ENCODE measurements at regions of chr16 and their contacts with region 1.

Region 1: DNA sequence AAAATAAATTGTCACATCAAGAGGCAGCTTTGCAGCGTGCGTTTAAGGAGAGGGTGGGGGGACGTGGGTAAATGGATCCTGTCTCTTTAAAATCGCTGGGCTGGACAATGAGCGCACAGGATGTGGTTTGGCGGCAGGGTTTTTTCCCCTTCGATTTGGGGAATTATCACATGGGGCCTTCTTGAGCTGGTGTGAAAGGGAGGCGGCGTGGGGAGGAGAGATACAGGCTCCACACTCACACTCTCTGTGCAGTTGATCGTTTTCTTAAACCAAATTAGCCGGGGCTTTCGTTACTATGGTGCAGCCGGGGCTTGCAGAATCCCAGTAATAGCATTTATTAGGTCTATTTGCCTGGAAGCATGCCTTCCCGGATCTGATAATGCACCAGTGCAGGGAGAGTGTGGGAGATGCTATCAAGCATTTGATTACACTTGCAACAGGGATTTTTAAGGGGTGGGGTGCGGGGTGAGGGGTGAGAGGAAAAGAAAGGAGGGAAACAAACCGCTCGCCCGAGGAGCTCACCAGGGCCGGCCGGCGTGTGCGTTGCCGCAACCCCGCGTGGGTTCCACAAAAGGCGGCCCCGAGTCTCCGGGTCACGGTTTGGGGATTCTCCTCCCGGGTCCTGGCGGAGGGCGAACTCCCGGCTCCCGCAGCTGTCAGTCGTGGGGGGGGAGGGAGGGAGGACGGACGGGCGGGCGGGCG is 58.9 kb upstream of the GSE1 start:
- DNase-seq: peak in 9 of 10 donors; percentile 33 to 83 (median 63)
- ATAC-seq: peak; percentile 39 to 58
- H3K4me3 Mint-ChIP-seq: peak overlapping the region; percentile 90 to 98 (median 96)
- H3K27ac Mint-ChIP-seq: peak overlapping the region; percentile 63 to 97 (median 94)
- H3K4me1 Mint-ChIP-seq: peaks cover 22 to 43% (median 41%) of the 10 kb centered on the region in 4 donors
- H3K27me3 Mint-ChIP-seq: no peaks in the 10 kb centered on the region

Region 2: GRCh38 chr16:85448557-85449197 is 105.6 kb before region 1 on chr16:
- POLR2A ChIA-PET with region 1: interaction called, 57 read pairs
- DNase-seq: peak; percentile 48 to 88 (median 73)
- ATAC-seq: peak; percentile 84 to 85
- H3K4me3 Mint-ChIP-seq: peak overlapping the region; percentile 73 to 86 (median 80)
- H3K27ac Mint-ChIP-seq: peak overlapping the region; percentile 86 to 98 (median 96)
- H3K4me1 Mint-ChIP-seq: peaks cover 28 to 77% (median 66%) of the 10 kb centered on the region in 4 donors
- H3K27me3 Mint-ChIP-seq: no peaks in the 10 kb centered on the region

Region 3: DNA sequence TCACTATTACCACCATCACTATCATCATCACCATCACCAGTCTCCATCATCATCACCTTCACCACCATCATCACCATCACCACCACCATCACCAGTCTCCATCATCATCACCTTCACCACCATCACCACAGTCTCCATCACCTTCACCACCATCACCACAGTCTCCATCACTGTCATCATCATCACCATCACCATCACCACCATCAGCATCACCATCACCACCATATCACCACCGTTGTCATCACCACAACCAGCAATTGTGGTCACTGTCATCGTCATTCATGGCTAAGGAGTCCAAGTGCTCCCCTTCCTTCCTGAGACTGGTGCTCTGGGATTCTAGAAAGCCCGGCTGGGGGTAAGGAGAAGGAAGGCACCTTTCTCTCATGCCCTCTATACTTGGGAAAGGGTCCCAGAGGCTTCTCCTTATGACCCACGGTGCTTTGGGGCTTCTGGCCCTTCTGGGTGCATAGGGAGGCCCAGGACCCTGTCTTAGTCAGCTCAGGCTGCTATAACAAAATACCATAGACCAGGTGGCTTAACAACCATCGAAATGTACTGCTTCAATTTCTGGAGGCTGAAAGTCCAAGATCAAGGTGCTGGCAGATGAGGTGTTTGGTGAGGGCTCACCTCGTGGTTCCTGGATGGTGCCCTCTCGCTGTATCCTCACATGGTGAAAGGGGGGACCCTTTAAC is 34.6 kb before region 1 on chr16:
- POLR2A ChIA-PET with region 1: no interaction called
- DNase-seq: peak in 1 of 10 donors; percentile 35
- ATAC-seq: no peak
- H3K4me3 Mint-ChIP-seq: peak overlapping the region in 2 of 10 donors; percentile 8 to 68
- H3K27ac Mint-ChIP-seq: peak overlapping the region in 5 of 10 donors; percentile 1 to 94 (median 57)
- H3K4me1 Mint-ChIP-seq: peaks cover 3 to 14% (median 8%) of the 10 kb centered on the region in 4 donors
- H3K27me3 Mint-ChIP-seq: peaks cover 0 to 4% (median 0%) of the 10 kb centered on the region in 5 donors

Region 4: GRCh38 chr16:85564277-85565051 is 10.2 kb after region 1 on chr16:
- POLR2A ChIA-PET with region 1: interaction called, 39 read pairs
- DNase-seq: peak in 2 of 10 donors; percentile 13 to 25
- ATAC-seq: no peak
- H3K4me3 Mint-ChIP-seq: peak overlapping the region in 2 of 10 donors; percentile 31 to 41
- H3K27ac Mint-ChIP-seq: peak overlapping the region; percentile 70 to 92 (median 84)
- H3K4me1 Mint-ChIP-seq: peaks cover 31 to 85% (median 82%) of the 10 kb centered on the region in 4 donors
- H3K27me3 Mint-ChIP-seq: no peaks in the 10 kb centered on the region

Region 5: GRCh38 chr16:85569615-85570212 is 15.5 kb after region 1 on chr16:
- POLR2A ChIA-PET with region 1: interaction called, 39 read pairs
- DNase-seq: peak in 8 of 10 donors; percentile 28 to 71 (median 40)
- ATAC-seq: peak; percentile 58 to 69
- H3K4me3 Mint-ChIP-seq: peak overlapping the region; percentile 61 to 88 (median 81)
- H3K27ac Mint-ChIP-seq: peak overlapping the region; percentile 87 to 95 (median 91)
- H3K4me1 Mint-ChIP-seq: peaks cover 44 to 81% (median 78%) of the 10 kb centered on the region in 4 donors
- H3K27me3 Mint-ChIP-seq: no peaks in the 10 kb centered on the region

Region 6: GRCh38 chr16:85583491-85584181 is 29.4 kb after region 1 on chr16:
- POLR2A ChIA-PET with region 1: interaction called, 12 read pairs
- DNase-seq: no peak
- ATAC-seq: peak; percentile 73 to 87
- H3K4me3 Mint-ChIP-seq: peak overlapping the region in 4 of 10 donors; percentile 27 to 47 (median 32)
- H3K27ac Mint-ChIP-seq: peak overlapping the region; percentile 9 to 91 (median 70)
- H3K4me1 Mint-ChIP-seq: peaks cover 26 to 59% (median 52%) of the 10 kb centered on the region in 4 donors
- H3K27me3 Mint-ChIP-seq: no peaks in the 10 kb centered on the region

Region 7: DNA sequence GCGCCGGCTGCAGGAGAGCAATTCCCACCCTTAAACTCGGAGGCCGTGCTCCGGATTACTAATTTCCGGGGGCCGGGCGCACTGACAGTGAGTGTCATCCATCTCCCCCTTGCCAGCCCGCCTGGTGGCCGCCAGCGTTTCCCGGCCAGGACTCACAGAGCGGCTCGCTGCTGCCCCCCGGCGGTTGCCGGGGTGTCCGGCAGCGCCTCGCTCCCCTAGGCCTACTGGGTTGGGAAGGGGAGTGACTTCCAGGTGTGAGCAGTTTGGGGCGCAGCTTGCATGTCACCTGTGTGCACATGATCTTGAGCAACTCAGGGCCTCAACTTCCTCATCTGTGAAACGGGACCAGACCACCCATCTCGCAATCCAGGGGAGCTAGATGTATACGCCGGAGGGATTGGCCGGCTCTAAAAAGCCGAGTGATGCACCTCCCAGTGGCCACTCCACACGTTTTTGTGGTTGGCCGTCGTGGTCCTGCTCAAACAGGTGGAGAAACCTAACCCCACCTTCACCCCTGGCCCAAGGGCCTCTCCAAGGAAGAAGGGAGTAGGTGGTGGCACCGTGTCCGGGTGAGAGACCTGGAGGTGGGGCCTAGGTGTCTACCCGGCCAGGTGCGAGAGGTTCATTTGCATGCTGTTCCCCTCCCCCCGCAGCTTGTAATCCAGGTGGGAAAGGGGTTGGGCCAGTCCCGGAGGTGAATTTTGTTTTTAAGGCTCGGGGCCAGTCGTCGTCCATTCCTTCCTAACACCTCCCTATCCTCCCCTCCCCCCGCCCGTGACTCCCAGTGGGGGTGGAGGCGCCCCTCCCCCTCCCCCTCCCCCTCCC is 56.5 kb after region 1 on chr16:
- POLR2A ChIA-PET with region 1: interaction called, 30 read pairs
- DNase-seq: peak; percentile 76 to 93 (median 88)
- ATAC-seq: peak; percentile 56 to 68
- H3K4me3 Mint-ChIP-seq: peak overlapping the region; percentile 74 to 92 (median 84)
- H3K27ac Mint-ChIP-seq: peak overlapping the region; percentile 47 to 87 (median 80)
- H3K4me1 Mint-ChIP-seq: peaks cover 11 to 57% (median 41%) of the 10 kb centered on the region in 4 donors
- H3K27me3 Mint-ChIP-seq: no peaks in the 10 kb centered on the region

Region 8: DNA sequence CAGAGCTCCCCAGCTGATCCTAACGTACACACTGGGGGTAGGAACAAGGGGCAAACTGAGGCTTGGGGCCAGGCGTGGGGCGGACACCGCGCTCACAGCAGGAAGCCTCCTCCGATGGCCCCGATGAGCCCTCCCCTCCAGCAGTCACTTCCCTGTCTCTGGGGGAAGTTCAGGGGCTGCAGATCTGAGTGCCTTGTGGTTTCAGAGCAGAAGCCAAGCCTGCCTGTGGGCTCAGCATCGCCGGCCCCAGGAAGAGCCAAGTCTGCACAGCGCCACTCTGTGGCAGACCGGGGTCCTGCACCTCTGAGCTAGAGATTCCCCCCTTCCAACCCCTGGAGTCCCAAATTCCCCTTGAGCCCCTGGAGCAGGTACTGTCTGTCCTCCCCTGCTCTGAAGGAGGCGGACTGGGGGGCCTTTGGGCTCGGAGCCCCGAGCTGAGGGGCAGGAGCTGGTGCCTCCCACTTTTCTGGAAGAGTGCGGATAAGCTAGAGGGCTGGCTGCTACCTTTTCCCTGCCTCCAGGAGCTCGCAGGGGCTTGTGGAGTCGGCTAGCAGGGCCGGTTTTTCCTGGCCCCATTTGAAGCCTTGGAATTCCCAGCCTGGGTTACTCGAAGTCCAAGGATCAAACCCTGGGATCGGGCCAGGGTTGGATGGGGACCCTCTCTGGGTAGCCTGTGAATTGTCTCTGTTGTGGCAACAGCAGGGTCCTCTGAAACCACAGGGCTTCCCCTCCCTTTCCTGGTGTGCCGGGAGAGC is 61.8 kb after region 1 on chr16:
- POLR2A ChIA-PET with region 1: interaction called, 30 read pairs
- DNase-seq: peak; percentile 76 to 93 (median 84)
- ATAC-seq: peak; percentile 63 to 76
- H3K4me3 Mint-ChIP-seq: peak overlapping the region; percentile 78 to 93 (median 86)
- H3K27ac Mint-ChIP-seq: peak overlapping the region; percentile 47 to 93 (median 82)
- H3K4me1 Mint-ChIP-seq: peaks cover 22 to 53% (median 50%) of the 10 kb centered on the region in 4 donors
- H3K27me3 Mint-ChIP-seq: no peaks in the 10 kb centered on the region

Measured in naive thymus-derived CD8-positive, alpha-beta T cell (primary cell).